B cell (primary cell): ENCODE measurements at regions of chr3 and their contacts with region 1.

Region 1: GRCh38 chr3:141460097-141460704 is 26.6 kb upstream of the RASA2 start:
- DNase-seq: peak; percentile 85
- ATAC-seq: peak; percentile 99
- H3K4me3 ChIP-seq: no peak overlapping the region
- H3K4me3 Mint-ChIP-seq: no peak overlapping the region
- H3K27ac ChIP-seq: no peak overlapping the region
- H3K27ac Mint-ChIP-seq: no peak overlapping the region
- H3K4me1 ChIP-seq: peaks cover 9 to 10% of the 10 kb centered on the region in 2 donors
- H3K4me1 Mint-ChIP-seq: peaks cover 13% of the 10 kb centered on the region
- H3K27me3 ChIP-seq: no peaks in the 10 kb centered on the region
- H3K27me3 Mint-ChIP-seq: no peaks in the 10 kb centered on the region
- CTCF ChIP-seq: peak; percentile 92

Region 2: DNA sequence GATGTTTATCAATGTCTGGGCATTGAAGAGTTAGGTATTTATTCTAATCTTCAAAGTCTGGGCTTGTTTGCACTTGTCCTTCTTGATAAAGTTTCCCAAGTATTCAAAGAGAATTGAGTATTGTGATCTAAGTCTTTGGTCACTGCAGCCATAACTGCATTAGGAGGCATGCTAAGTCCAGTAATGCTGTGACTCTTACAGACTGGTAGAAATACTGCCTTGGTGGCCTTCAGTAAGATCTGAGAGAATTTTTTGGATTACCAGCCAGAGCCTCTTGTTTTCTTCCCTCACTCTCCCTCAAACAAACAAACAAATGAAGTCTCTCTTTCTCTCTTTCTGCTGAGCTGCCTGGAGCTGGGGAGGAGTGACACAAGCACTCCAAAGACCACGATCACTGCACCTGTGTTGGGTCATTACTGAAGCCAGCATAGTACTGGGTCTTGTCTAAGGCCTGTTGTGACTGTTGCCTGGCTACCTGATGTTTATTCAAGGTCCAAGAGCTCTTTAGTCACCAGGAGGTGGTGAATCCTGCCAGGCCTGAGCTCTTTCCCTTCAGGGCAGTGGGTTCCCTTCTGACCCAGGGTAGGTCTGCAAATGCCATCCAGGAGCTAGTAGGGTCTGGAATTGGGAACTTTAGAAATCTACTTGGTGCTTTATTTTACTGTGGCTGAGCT is 1969.0 kb before region 1 on chr3:
- CTCF ChIA-PET with region 1: no interaction called
- POLR2A ChIA-PET with region 1: no interaction called
- intact Hi-C with region 1: no loop called
- DNase-seq: no peak
- ATAC-seq: no peak
- H3K4me3 ChIP-seq: no peak overlapping the region
- H3K4me3 Mint-ChIP-seq: no peak overlapping the region
- H3K27ac ChIP-seq: no peak overlapping the region
- H3K27ac Mint-ChIP-seq: no peak overlapping the region
- H3K4me1 ChIP-seq: no peaks in the 10 kb centered on the region
- H3K4me1 Mint-ChIP-seq: no peaks in the 10 kb centered on the region
- H3K27me3 ChIP-seq: no peaks in the 10 kb centered on the region
- H3K27me3 Mint-ChIP-seq: no peaks in the 10 kb centered on the region
- CTCF ChIP-seq: no peak

Region 3: DNA sequence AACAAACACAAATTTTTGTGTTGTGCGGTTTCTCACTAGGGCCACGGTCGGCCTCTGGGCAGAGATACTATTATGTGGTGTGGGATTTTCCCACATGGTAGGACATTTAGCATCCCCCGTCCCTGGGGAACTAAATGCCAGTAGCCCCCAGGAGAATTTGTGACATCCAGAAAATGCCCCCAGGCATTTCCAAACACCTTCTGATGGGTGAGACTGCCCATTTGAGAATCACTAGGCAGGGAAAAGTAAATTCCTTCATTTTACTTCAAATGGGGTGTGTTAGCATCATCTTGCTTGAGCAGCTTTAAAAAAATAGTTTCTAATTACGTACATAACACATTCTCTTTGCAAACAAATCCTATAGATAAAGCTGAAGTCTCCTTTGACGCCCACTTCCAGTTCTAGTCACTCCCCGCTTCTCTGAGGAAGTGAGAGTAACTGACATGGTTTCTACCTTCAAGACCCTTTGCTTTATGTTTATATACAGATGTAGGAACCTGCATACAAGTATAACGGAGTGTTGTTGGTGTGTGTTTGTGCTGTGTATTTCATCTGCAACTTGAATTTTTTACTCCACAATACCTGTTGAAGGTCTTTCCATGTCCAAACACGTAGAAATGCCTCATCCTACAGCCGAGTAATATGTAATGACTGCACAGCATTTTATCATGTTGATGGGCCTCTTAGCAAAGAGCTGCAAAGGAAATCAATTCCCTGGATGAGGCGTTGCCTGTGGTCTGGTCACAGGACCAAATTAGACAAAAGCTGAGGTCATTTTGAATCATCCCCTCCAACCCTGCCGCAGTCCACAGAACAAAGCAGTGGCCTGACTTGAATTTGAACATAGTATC is 123.3 kb before region 1 on chr3:
- CTCF ChIA-PET with region 1: no interaction called
- POLR2A ChIA-PET with region 1: no interaction called
- intact Hi-C with region 1: no loop called
- DNase-seq: peak; percentile 68
- ATAC-seq: peak; percentile 87
- H3K4me3 ChIP-seq: peak overlapping the region in 1 of 5 experiments; percentile 10
- H3K4me3 Mint-ChIP-seq: peak overlapping the region; percentile 65
- H3K27ac ChIP-seq: no peak overlapping the region
- H3K27ac Mint-ChIP-seq: peak overlapping the region; percentile 73
- H3K4me1 ChIP-seq: peaks cover 12 to 13% of the 10 kb centered on the region in 2 donors
- H3K4me1 Mint-ChIP-seq: peaks cover 15% of the 10 kb centered on the region
- H3K27me3 ChIP-seq: no peaks in the 10 kb centered on the region
- H3K27me3 Mint-ChIP-seq: peaks cover 4% of the 10 kb centered on the region
- CTCF ChIP-seq: no peak

Region 4: GRCh38 chr3:141360888-141361598 is 99.2 kb before region 1 on chr3:
- CTCF ChIA-PET with region 1: interaction called, 104 read pairs
- POLR2A ChIA-PET with region 1: no interaction called
- intact Hi-C with region 1: no loop called
- DNase-seq: peak; percentile 54
- ATAC-seq: peak; percentile 65
- H3K4me3 ChIP-seq: no peak overlapping the region
- H3K4me3 Mint-ChIP-seq: peak overlapping the region; percentile 3
- H3K27ac ChIP-seq: no peak overlapping the region
- H3K27ac Mint-ChIP-seq: no peak overlapping the region
- H3K4me1 ChIP-seq: no peaks in the 10 kb centered on the region
- H3K4me1 Mint-ChIP-seq: no peaks in the 10 kb centered on the region
- H3K27me3 ChIP-seq: no peaks in the 10 kb centered on the region
- H3K27me3 Mint-ChIP-seq: no peaks in the 10 kb centered on the region
- CTCF ChIP-seq: peak; percentile 58

Region 5: DNA sequence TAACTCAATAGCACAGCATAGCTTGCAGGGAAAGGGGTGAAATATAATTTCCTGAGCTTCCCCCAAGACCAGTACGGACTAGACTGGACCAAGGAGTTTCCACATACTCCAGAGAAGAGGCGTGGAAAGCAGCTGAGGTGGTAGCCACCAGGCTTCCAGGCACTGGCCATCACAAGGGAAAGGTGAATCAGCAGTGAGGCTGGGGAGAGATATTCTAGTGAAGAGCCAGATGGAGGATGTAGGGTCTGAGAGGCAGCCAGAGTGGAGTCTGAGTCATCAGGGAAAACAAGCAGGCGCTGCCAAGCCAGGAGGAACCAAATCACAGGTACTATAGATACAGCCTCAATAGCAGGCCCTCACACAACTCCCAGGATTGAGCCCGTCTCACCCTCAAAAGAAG is 17.0 kb after region 1 on chr3:
- CTCF ChIA-PET with region 1: interaction called, 55 read pairs
- POLR2A ChIA-PET with region 1: no interaction called
- intact Hi-C with region 1: loop called (anchors 2 kb)
- DNase-seq: no peak
- ATAC-seq: no peak
- H3K4me3 ChIP-seq: no peak overlapping the region
- H3K4me3 Mint-ChIP-seq: no peak overlapping the region
- H3K27ac ChIP-seq: no peak overlapping the region
- H3K27ac Mint-ChIP-seq: peak overlapping the region; percentile 53
- H3K4me1 ChIP-seq: peaks cover 0 to 5% of the 10 kb centered on the region in 2 donors
- H3K4me1 Mint-ChIP-seq: peaks cover 17% of the 10 kb centered on the region
- H3K27me3 ChIP-seq: no peaks in the 10 kb centered on the region
- H3K27me3 Mint-ChIP-seq: no peaks in the 10 kb centered on the region
- CTCF ChIP-seq: no peak

Region 6: GRCh38 chr3:141561426-141562034 is 101.3 kb after region 1 on chr3:
- CTCF ChIA-PET with region 1: interaction called, 409 read pairs
- POLR2A ChIA-PET with region 1: interaction called, 3 read pairs
- intact Hi-C with region 1: loop called (anchors 1 kb)
- DNase-seq: peak; percentile 75
- ATAC-seq: peak; percentile 54
- H3K4me3 ChIP-seq: no peak overlapping the region
- H3K4me3 Mint-ChIP-seq: no peak overlapping the region
- H3K27ac ChIP-seq: peak overlapping the region in 1 of 2 donors; percentile 41
- H3K27ac Mint-ChIP-seq: no peak overlapping the region
- H3K4me1 ChIP-seq: peaks cover 11 to 13% of the 10 kb centered on the region in 2 donors
- H3K4me1 Mint-ChIP-seq: peaks cover 6% of the 10 kb centered on the region
- H3K27me3 ChIP-seq: no peaks in the 10 kb centered on the region
- H3K27me3 Mint-ChIP-seq: no peaks in the 10 kb centered on the region
- CTCF ChIP-seq: peak; percentile 100

Region 7: GRCh38 chr3:141575879-141576743 is 115.9 kb after region 1 on chr3:
- CTCF ChIA-PET with region 1: interaction called, 10 read pairs
- POLR2A ChIA-PET with region 1: no interaction called
- intact Hi-C with region 1: no loop called
- DNase-seq: peak; percentile 44
- ATAC-seq: peak; percentile 47
- H3K4me3 ChIP-seq: no peak overlapping the region
- H3K4me3 Mint-ChIP-seq: no peak overlapping the region
- H3K27ac ChIP-seq: peak overlapping the region in 1 of 2 donors; percentile 10
- H3K27ac Mint-ChIP-seq: peak overlapping the region; percentile 62
- H3K4me1 ChIP-seq: peaks cover 0 to 3% of the 10 kb centered on the region in 2 donors
- H3K4me1 Mint-ChIP-seq: peaks cover 6% of the 10 kb centered on the region
- H3K27me3 ChIP-seq: no peaks in the 10 kb centered on the region
- H3K27me3 Mint-ChIP-seq: no peaks in the 10 kb centered on the region
- CTCF ChIP-seq: peak; percentile 70

Region 8: GRCh38 chr3:141913150-141913811 is 453.1 kb after region 1 on chr3:
- CTCF ChIA-PET with region 1: interaction called, 4 read pairs
- POLR2A ChIA-PET with region 1: no interaction called
- intact Hi-C with region 1: loop called (anchors 2 kb)
- DNase-seq: peak; percentile 65
- ATAC-seq: peak; percentile 70
- H3K4me3 ChIP-seq: no peak overlapping the region
- H3K4me3 Mint-ChIP-seq: no peak overlapping the region
- H3K27ac ChIP-seq: no peak overlapping the region
- H3K27ac Mint-ChIP-seq: no peak overlapping the region
- H3K4me1 ChIP-seq: no peaks in the 10 kb centered on the region
- H3K4me1 Mint-ChIP-seq: no peaks in the 10 kb centered on the region
- H3K27me3 ChIP-seq: no peaks in the 10 kb centered on the region
- H3K27me3 Mint-ChIP-seq: no peaks in the 10 kb centered on the region
- CTCF ChIP-seq: peak; percentile 78